Mammary epithelial cell (primary cell): ENCODE measurements at regions of chr1 and their contacts with region 1.

Region 1: DNA sequence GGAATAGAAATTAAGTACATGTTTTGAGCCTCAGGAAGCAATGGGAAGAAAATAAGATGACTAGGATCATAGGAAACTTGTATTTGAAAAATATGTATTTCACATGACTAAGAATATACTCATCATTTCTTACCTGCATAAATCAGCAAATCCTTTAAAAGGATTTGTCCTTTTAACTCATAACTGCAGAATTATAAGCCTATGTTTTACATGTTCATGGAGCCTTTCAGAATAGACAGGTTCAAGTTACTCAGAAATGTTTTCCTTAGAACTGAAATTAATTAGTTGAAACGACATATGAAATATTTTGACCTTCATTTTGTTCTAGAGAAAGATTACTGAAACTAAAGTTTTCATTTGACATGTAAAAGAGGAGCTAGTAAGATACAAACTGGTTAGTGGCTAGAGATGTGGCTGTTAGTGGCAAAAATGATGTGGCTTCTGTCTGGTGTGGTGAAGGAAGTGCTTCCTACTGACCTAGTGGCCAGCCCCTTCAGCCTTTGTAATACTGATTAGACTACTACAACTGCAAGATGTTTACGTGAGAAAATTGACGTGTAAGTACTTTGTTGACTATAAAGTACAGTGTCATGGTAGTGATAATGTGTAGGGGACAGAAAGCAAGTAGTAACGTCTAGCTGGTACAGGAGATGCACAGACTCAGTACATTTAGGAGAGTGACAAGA is 54.7 kb downstream of the PACC1 start:
- DNase-seq: no peak
- H3K4me3 ChIP-seq: no peak overlapping the region
- H3K27ac ChIP-seq: no peak overlapping the region
- H3K4me1 ChIP-seq: no peaks in the 10 kb centered on the region
- H3K27me3 ChIP-seq: no peaks in the 10 kb centered on the region
- CTCF ChIP-seq: no peak

Region 2: DNA sequence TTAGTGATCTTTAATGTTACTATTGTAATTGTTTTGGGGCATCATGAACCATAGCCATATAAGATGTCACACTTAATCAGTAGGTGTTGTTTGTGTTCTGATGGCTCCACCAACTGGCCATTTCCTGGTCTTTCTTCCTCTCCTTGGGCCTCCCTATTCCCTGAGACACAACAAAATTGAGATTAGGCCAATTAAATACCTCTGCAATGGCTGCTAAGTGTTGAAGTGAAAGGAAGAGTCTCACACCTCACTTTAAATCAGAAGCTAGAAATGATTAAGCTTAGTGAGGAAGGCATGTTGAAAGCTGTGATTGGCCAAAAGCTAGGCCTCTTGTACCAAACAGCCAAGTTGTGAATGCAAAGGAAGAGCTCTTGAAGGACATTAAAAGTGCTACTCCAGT is 44.0 kb before region 1 on chr1:
- CTCF ChIA-PET with region 1: no interaction called
- dilution Hi-C with region 1: loop called (anchors 5 kb)
- in situ Hi-C with region 1: no loop called
- intact Hi-C with region 1: no loop called
- DNase-seq: peak; percentile 34
- H3K4me3 ChIP-seq: no peak overlapping the region
- H3K27ac ChIP-seq: no peak overlapping the region
- H3K4me1 ChIP-seq: peaks cover 3% of the 10 kb centered on the region
- H3K27me3 ChIP-seq: no peaks in the 10 kb centered on the region
- CTCF ChIP-seq: peak; percentile 31 to 51